ENCODE measurements at regions of chr2 and their contacts with region 1.

Region 1: DNA sequence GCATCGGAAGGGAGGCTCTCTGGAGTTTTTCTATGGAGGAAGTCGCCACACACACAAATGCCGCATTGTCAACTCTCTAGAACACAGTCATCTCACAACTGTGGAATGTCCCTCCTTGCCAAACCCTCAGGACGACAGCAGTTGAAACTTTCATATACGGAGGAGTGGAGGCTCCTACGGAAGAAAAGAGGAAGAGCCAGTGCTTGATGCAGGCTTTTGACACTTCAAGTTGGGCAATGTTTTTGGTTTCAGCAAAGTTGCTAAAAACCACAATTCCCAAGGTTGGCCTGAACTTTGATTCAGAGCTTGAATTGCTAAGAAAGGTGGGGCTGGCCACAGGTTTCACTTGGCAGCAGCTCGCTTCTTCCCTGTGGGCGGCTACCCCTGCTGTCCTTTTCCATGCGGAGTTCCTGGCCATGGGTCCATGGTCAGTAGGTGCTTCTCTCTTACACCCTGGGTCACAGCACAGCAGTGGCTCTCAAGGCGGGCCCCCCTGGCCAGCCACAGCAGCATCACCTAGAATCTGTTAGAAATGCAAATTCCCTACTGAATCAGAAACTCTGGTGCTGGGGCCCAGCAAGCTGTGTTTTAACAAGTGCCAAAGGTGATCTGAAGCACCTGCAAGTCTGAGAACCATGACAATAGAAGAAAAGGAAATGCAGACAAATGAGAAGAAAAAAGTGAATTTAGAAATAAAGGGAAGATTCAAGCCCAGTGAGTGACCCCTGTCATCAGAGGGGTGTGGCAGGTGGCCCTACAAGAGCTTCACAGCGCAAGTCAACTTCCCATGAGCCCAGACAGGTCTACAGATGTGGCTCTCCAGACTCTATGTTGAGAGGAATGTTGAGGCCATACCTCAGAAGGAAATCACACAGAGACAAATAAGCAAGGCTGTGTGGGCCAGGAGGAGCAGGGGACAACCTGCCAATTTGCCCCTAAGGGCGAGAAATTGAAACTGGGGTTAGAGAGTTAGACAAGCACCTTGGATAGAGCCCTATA is 856.4 kb downstream of the RNF144A start:
- DNase-seq: peak; percentile 26
- H3K4me3 Mint-ChIP-seq: peak overlapping the region; percentile 31
- H3K27ac Mint-ChIP-seq: peak overlapping the region; percentile 91
- H3K4me1 Mint-ChIP-seq: peaks cover 58% of the 10 kb centered on the region
- H3K27me3 Mint-ChIP-seq: no peaks in the 10 kb centered on the region

Region 2: GRCh38 chr2:7437716-7438632 is 335.7 kb before region 1 on chr2:
- intact Hi-C with region 1: loop called (anchors 2 kb)
- DNase-seq: no peak
- H3K4me3 Mint-ChIP-seq: peak overlapping the region; percentile 39
- H3K27ac Mint-ChIP-seq: peak overlapping the region; percentile 95
- H3K4me1 Mint-ChIP-seq: peaks cover 79% of the 10 kb centered on the region
- H3K27me3 Mint-ChIP-seq: no peaks in the 10 kb centered on the region

Region 3: DNA sequence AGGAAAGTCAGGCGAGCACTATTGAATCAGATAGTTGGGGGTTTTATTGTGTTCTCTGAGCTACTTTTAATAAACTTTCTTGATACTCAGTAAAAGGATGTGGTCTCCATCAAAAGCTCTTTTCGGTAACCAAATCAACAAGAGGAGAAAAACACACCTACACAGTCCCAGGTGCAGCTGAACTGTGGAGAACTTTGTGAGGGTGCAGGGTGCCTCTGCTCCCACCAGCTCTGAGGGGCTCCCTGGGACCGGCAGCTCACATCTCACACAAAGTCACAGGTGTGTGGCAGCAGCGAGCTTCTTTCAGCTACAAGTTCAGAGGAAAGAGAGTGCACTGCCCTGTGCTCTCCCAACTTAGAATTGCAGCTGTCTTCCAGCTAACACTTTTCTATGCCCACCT is 206.0 kb before region 1 on chr2:
- intact Hi-C with region 1: loop called (anchors 5 kb)
- DNase-seq: peak; percentile 53
- H3K4me3 Mint-ChIP-seq: peak overlapping the region; percentile 37
- H3K27ac Mint-ChIP-seq: peak overlapping the region; percentile 82
- H3K4me1 Mint-ChIP-seq: peaks cover 63% of the 10 kb centered on the region
- H3K27me3 Mint-ChIP-seq: no peaks in the 10 kb centered on the region

Region 4: GRCh38 chr2:7758073-7758759 is 15.4 kb before region 1 on chr2:
- intact Hi-C with region 1: loop called (anchors 1 kb)
- DNase-seq: no peak
- H3K4me3 Mint-ChIP-seq: no peak overlapping the region
- H3K27ac Mint-ChIP-seq: peak overlapping the region; percentile 78
- H3K4me1 Mint-ChIP-seq: peaks cover 18% of the 10 kb centered on the region
- H3K27me3 Mint-ChIP-seq: no peaks in the 10 kb centered on the region

Region 5: GRCh38 chr2:7984693-7985353 is 211.2 kb after region 1 on chr2:
- intact Hi-C with region 1: loop called (anchors 2 kb)
- DNase-seq: no peak
- H3K4me3 Mint-ChIP-seq: no peak overlapping the region
- H3K27ac Mint-ChIP-seq: peak overlapping the region; percentile 89
- H3K4me1 Mint-ChIP-seq: peaks cover 32% of the 10 kb centered on the region
- H3K27me3 Mint-ChIP-seq: no peaks in the 10 kb centered on the region

Region 6: GRCh38 chr2:8408560-8409460 is 635.1 kb after region 1 on chr2:
- intact Hi-C with region 1: loop called (anchors 2 kb)
- DNase-seq: peak; percentile 43
- H3K4me3 Mint-ChIP-seq: no peak overlapping the region
- H3K27ac Mint-ChIP-seq: peak overlapping the region; percentile 79
- H3K4me1 Mint-ChIP-seq: peaks cover 36% of the 10 kb centered on the region
- H3K27me3 Mint-ChIP-seq: peaks cover 24% of the 10 kb centered on the region

Region 7: DNA sequence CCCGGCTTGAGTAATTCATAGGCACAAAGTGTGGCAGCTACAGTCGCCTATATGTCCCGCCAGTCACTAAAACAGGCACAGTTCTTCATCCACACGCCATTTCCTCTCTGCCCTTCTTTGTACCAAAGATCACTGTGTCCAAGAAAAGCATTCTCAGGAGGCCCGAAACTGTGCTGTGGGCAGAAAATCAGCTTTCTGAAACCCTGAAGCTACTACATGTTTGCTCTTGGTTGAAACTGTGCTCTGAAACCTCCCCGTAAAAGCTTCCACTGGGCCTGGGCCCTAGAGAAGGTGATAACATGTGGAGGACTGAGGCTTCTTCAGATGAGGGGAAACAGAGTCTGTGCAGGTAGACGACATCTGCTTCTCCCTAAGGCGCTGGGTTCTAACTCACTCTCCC is 832.6 kb after region 1 on chr2:
- intact Hi-C with region 1: loop called (anchors 5 kb)
- DNase-seq: no peak
- H3K4me3 Mint-ChIP-seq: no peak overlapping the region
- H3K27ac Mint-ChIP-seq: peak overlapping the region; percentile 53
- H3K4me1 Mint-ChIP-seq: peaks cover 55% of the 10 kb centered on the region
- H3K27me3 Mint-ChIP-seq: peaks cover 7% of the 10 kb centered on the region